OCI-LY7 (cell line): ENCODE measurements at regions of chrX and their contacts with region 1.

Region 1: DNA sequence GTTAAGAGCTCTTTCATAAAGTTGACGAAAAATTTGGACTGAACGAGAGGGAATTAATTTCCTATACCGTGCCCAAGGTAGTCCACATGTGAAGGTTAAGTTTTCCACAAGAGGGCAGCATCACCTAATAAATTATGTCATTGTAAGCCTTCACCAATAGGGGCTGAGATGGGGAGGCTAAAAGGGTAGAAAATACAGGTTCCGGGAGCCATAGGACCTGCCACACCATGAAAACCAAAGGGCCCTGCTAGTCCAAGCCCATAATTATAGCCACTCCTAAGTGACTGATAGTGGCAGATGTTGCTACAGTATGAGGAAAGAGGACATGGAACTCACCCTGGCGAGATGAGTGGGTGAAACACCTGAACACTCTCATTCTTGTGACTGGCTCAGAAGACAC is 122.2 kb downstream of the SHROOM4 start:
- DNase-seq: peak; percentile 55
- H3K4me3 ChIP-seq: no peak overlapping the region
- H3K27ac ChIP-seq: no peak overlapping the region
- H3K4me1 ChIP-seq: no peaks in the 10 kb centered on the region
- CTCF ChIP-seq: peak; percentile 73

Region 2: DNA sequence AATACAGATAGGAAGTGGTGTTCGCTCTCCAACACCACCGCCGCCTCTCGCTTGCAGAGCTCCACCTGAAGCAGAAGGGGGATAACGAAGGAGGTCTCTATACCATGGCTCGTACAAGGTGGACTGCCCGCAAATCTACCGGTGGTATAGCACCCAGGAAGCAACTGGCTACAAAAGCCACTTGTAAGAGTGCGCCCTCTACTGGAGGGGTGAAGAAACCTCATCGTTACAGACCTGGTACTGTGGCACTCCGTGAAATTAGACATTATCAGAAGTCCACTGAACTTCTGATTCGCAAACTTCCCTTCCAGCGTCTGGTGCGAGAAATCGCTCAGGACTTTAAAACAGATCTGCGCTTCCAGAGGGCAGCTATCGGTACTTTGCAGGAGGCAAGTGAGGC is 213.5 kb after region 1 on chrX:
- CTCF ChIA-PET with region 1: no interaction called
- POLR2A ChIA-PET with region 1: no interaction called
- intact Hi-C with region 1: loop called (anchors 10 kb)
- DNase-seq: peak; percentile 12
- H3K4me3 ChIP-seq: no peak overlapping the region
- H3K27ac ChIP-seq: no peak overlapping the region
- H3K4me1 ChIP-seq: no peaks in the 10 kb centered on the region
- CTCF ChIP-seq: peak; percentile 65

Region 3: DNA sequence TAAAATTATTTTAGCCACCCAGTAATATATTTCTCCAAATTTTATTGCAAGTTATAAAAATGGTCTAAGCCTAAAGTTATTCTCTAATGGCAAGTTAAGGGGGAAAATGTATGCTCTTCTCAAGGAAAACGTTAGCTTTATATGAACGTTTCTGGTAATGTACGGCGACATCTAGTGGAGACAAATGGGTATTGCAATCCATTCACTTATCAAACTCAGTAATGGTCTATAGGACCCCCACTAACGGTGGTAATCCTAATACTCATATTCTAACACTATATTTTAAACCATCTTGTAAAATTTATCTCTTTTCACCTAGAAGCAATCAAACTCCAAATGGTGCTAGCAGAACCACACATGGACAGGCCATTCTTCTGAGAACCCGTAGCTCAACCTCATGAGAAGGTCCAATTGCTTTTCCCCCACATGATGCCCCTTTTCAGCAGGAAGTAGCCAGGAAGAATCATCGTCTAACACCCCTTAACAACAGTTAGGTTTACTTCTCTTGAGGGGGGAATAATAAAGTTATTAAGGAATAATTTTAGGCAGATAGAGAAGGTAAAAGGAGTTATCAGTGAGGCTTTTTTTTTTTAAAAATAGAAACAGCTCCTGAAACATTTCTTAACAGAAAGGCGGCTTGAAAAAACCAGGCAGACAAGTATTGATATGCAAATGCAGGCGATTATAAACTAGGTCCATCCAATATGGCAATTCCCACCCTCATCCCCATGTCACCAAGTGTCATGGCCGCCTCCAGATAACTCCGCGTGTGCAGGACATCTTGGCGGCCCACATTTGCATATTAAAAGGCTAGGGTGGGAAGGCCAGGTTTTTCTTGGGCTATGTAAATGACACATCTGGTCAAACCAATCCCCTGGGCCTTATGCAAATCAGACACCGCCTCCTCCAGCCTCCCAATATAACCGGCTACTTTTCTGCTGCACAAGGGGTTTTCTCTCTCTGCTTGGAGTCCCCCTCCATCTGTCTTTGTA is 769.5 kb after region 1 on chrX:
- CTCF ChIA-PET with region 1: no interaction called
- POLR2A ChIA-PET with region 1: no interaction called
- intact Hi-C with region 1: loop called (anchors 5 kb)
- DNase-seq: peak; percentile 47
- H3K4me3 ChIP-seq: no peak overlapping the region
- H3K27ac ChIP-seq: no peak overlapping the region
- H3K4me1 ChIP-seq: peaks cover 5% of the 10 kb centered on the region
- CTCF ChIP-seq: peak; percentile 77